Mammary epithelial cell (primary cell): ENCODE measurements at regions of chr6 and their contacts with region 1.

Region 1: DNA sequence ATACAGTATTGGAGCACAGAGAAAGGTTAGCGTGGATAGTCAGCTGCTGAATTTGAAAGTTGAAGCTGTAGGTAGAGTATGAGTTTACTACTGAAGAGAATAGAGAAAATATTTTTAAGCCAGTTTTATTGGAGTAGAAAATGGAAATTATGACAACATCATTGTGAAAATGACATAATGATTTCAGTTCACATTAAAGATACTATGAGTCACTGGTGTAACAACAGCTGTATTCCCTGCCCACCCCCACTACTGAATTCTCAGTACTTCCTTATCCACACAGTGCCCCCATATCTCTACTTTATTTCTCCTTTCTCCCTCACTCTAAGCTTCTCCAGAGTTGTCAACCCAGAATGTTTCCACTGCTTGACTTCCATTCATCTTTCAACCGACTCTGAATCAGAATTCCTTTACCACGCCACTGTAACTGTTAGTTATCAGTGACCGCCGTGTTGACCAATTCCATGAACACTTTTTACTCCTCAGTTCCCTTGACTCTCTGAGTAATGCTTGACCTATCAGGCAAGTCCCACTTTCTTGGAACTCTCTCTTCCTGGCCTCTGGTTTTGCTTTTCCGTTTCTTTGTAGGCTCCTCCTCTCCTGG is 139.6 kb downstream of the AIG1 start:
- DNase-seq: no peak
- H3K4me3 ChIP-seq: no peak overlapping the region
- H3K27ac ChIP-seq: no peak overlapping the region
- H3K4me1 ChIP-seq: no peaks in the 10 kb centered on the region
- H3K27me3 ChIP-seq: no peaks in the 10 kb centered on the region
- CTCF ChIP-seq: no peak

Region 2: GRCh38 chr6:143136647-143137046 is 63.6 kb before region 1 on chr6:
- CTCF ChIA-PET with region 1: no interaction called
- dilution Hi-C with region 1: loop called (anchors 5 kb)
- in situ Hi-C with region 1: no loop called
- intact Hi-C with region 1: no loop called
- DNase-seq: no peak
- H3K4me3 ChIP-seq: no peak overlapping the region
- H3K27ac ChIP-seq: no peak overlapping the region
- H3K4me1 ChIP-seq: no peaks in the 10 kb centered on the region
- H3K27me3 ChIP-seq: no peaks in the 10 kb centered on the region
- CTCF ChIP-seq: no peak